ENCODE measurements at regions of chr20 and their contacts with region 1.

Region 1: DNA sequence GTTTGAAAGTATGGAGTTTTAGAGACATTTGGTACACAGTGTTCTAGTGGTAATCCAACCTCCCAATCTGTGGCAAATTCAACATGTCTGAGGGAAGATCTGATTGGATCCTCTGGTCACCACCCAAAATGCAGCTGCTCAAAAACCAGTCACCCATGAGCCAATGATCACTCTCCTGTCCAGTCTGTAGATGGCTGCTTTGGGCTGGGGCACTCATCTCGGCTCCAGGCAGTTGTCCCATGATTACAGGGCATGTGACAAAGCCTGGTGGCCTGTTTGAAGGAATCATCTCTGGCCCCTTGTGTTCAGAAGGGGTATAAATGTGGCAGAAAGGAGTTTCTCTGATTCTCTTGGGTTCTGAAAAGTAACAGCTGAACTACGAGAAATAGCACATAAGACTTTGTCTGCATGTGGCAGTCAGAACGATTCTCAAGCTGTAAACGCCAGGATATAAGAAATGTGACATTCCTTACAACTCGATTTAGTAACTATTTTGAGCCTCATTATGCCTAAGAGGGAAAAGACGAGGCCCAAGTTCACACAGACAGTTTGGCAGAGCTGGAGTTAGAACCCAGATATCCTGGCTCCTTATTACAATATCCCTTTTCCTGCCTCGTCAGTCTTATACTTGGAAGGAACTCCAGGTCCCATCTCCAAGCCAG is 3.9 kb upstream of the C20orf202 start:
- DNase-seq: no peak
- H3K4me3 ChIP-seq: no peak overlapping the region
- H3K27ac ChIP-seq: no peak overlapping the region
- H3K4me1 ChIP-seq: no peaks in the 10 kb centered on the region
- H3K27me3 ChIP-seq: no peaks in the 10 kb centered on the region
- CTCF ChIP-seq: no peak
- POLR2A ChIP-seq: no peak

Region 2: GRCh38 chr20:967796-968742 is 231.3 kb before region 1 on chr20:
- intact Hi-C with region 1: loop called in 1 of 2 experiments (anchors 10 kb)
- DNase-seq: peak in 1 of 7 donors; percentile 25
- H3K4me3 ChIP-seq: no peak overlapping the region
- H3K27ac ChIP-seq: no peak overlapping the region
- H3K4me1 ChIP-seq: no peaks in the 10 kb centered on the region
- H3K27me3 ChIP-seq: no peaks in the 10 kb centered on the region
- CTCF ChIP-seq: no peak
- POLR2A ChIP-seq: no peak

Measured in adrenal gland (tissue), 19 donors.